ENCODE measurements at regions of chr20 and their contacts with region 1.

Region 1: DNA sequence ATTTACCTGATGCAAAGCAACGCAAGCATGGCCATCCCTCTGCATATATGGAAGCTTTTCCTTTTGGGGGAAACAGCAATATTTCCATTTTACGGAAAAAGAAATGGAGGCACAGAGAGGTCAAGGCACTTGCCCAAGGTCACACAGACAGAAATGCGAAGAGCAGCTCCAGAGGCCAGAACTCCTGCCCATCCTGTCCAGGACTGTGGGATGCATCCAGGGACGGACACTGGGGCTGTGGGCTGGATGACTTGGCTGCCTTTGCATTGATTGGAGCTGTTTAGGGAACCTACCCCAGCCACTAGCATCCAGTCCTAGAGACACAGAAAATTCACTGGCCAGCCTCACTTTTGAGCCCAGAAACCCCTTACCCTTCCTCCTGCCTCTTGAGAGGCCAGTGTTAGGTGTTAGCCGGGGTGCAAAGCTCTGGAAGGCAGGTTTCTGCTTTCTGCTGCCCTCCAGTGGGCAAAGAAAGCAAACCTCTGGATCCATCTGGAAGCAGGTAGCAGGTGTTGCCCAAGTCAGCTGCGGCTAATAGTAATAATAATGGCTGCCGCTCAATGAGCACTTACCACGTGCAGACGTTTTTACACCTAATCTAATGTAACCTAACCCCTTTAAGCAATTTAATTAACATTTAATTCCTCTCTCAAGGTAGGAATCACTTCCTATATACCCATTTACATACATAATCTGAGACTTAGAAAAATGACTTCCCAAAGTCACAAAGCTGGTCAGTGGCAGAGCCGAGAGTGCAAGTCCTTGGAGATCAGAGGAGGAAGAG is 31.7 kb upstream of the CCN5 start:
- DNase-seq: peak in 8 of 9 experiments; percentile 10 to 76 (median 59)
- ATAC-seq: peak; percentile 81
- H3K4me3 ChIP-seq: no peak overlapping the region
- H3K4me3 Mint-ChIP-seq: no peak overlapping the region
- H3K27ac ChIP-seq: no peak overlapping the region
- H3K27ac Mint-ChIP-seq: no peak overlapping the region
- H3K4me1 ChIP-seq: peaks cover 4% of the 10 kb centered on the region
- H3K4me1 Mint-ChIP-seq: peaks cover 9% of the 10 kb centered on the region
- H3K27me3 ChIP-seq: no peaks in the 10 kb centered on the region
- H3K27me3 Mint-ChIP-seq: peaks cover 9% of the 10 kb centered on the region
- CTCF ChIP-seq: peak; percentile 54

Region 2: GRCh38 chr20:44231713-44232468 is 451.6 kb before region 1 on chr20:
- CTCF ChIA-PET with region 1: no interaction called
- POLR2A ChIA-PET with region 1: no interaction called
- intact Hi-C with region 1: no loop called
- DNase-seq: no peak
- ATAC-seq: no peak
- H3K4me3 ChIP-seq: no peak overlapping the region
- H3K4me3 Mint-ChIP-seq: no peak overlapping the region
- H3K27ac ChIP-seq: no peak overlapping the region
- H3K27ac Mint-ChIP-seq: no peak overlapping the region
- H3K4me1 ChIP-seq: peaks cover 7% of the 10 kb centered on the region
- H3K4me1 Mint-ChIP-seq: peaks cover 6% of the 10 kb centered on the region
- H3K27me3 ChIP-seq: no peaks in the 10 kb centered on the region
- H3K27me3 Mint-ChIP-seq: no peaks in the 10 kb centered on the region
- CTCF ChIP-seq: no peak

Region 3: GRCh38 chr20:44388466-44389023 is 294.9 kb before region 1 on chr20:
- CTCF ChIA-PET with region 1: interaction called, 6 read pairs
- POLR2A ChIA-PET with region 1: no interaction called
- intact Hi-C with region 1: loop called (anchors 1 to 2 kb)
- DNase-seq: peak; percentile 13 to 77 (median 63)
- ATAC-seq: peak; percentile 88
- H3K4me3 ChIP-seq: no peak overlapping the region
- H3K4me3 Mint-ChIP-seq: no peak overlapping the region
- H3K27ac ChIP-seq: no peak overlapping the region
- H3K27ac Mint-ChIP-seq: no peak overlapping the region
- H3K4me1 ChIP-seq: no peaks in the 10 kb centered on the region
- H3K4me1 Mint-ChIP-seq: peaks cover 10% of the 10 kb centered on the region
- H3K27me3 ChIP-seq: no peaks in the 10 kb centered on the region
- H3K27me3 Mint-ChIP-seq: peaks cover 14% of the 10 kb centered on the region
- CTCF ChIP-seq: peak; percentile 68

Region 4: GRCh38 chr20:44609511-44610312 is 73.7 kb before region 1 on chr20:
- CTCF ChIA-PET with region 1: interaction called, 42 read pairs
- POLR2A ChIA-PET with region 1: interaction called, 4 read pairs
- intact Hi-C with region 1: loop called (anchors 1 to 5 kb)
- DNase-seq: peak; percentile 71 to 93 (median 87)
- ATAC-seq: peak; percentile 80
- H3K4me3 ChIP-seq: peak overlapping the region in 1 of 2 experiments; percentile 5
- H3K4me3 Mint-ChIP-seq: peak overlapping the region; percentile 53
- H3K27ac ChIP-seq: peak overlapping the region; percentile 69 to 83
- H3K27ac Mint-ChIP-seq: peak overlapping the region; percentile 98
- H3K4me1 ChIP-seq: peaks cover 48% of the 10 kb centered on the region
- H3K4me1 Mint-ChIP-seq: peaks cover 39% of the 10 kb centered on the region
- H3K27me3 ChIP-seq: no peaks in the 10 kb centered on the region
- H3K27me3 Mint-ChIP-seq: no peaks in the 10 kb centered on the region
- CTCF ChIP-seq: peak; percentile 92

Region 5: GRCh38 chr20:44651684-44652423 is 31.6 kb before region 1 on chr20 and contains the start of gene ADA:
- CTCF ChIA-PET with region 1: interaction called, 161 read pairs
- POLR2A ChIA-PET with region 1: interaction called, 5 read pairs
- intact Hi-C with region 1: loop called in 1 of 2 experiments (anchors 1 kb)
- DNase-seq: peak in 8 of 9 experiments; percentile 19 to 75 (median 55)
- ATAC-seq: peak; percentile 66
- H3K4me3 ChIP-seq: peak within 1 kb of the TSS; percentile 87 to 97
- H3K4me3 Mint-ChIP-seq: peak within 1 kb of the TSS; percentile 88
- H3K27ac ChIP-seq: peak within 1 kb of the TSS; percentile 70 to 75
- H3K27ac Mint-ChIP-seq: peak within 1 kb of the TSS; percentile 91
- H3K4me1 ChIP-seq: peaks cover 47% of the 10 kb centered on the region
- H3K4me1 Mint-ChIP-seq: peaks cover 46% of the 10 kb centered on the region
- H3K27me3 ChIP-seq: no peaks in the 10 kb centered on the region
- H3K27me3 Mint-ChIP-seq: no peaks in the 10 kb centered on the region
- CTCF ChIP-seq: no peak
- total RNA-seq, gene ADA: 27.9 to 30.2 TPM

Region 6: DNA sequence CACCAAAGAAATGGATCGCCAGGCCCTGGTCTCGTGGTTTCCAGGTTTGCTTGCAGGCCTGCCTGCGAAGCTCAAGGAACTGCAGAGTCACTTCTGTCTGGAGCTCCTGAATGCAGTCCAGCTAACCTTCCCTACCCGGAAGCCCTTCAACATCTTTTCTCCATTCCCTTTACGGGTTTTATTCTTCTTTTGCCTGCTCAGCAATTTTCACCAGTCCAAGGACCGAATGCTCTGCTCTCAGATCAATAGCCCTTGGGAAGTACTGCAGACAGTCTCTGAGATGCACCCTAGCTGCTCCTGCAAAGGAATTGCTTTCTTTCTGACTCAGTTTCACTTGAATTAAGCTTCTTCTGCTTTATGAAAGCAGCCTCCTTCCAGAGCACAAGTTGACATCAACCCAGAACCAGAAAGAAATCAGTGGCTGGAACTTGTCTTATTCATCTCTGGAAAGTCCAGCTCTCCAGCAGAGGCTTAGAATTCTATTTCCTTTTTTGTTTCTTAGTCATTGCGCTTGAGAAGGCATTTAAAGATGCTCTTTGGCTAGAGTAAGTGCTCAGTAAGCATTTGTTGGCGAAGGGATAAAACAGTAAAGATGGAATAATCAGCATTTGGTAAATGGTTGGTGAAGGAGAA is 183.4 kb after region 1 on chr20:
- CTCF ChIA-PET with region 1: interaction called, 59 read pairs
- POLR2A ChIA-PET with region 1: no interaction called
- intact Hi-C with region 1: loop called (anchors 1 kb)
- DNase-seq: no peak
- ATAC-seq: no peak
- H3K4me3 ChIP-seq: no peak overlapping the region
- H3K4me3 Mint-ChIP-seq: peak overlapping the region; percentile 65
- H3K27ac ChIP-seq: no peak overlapping the region
- H3K27ac Mint-ChIP-seq: no peak overlapping the region
- H3K4me1 ChIP-seq: peaks cover 7% of the 10 kb centered on the region
- H3K4me1 Mint-ChIP-seq: peaks cover 15% of the 10 kb centered on the region
- H3K27me3 ChIP-seq: no peaks in the 10 kb centered on the region
- H3K27me3 Mint-ChIP-seq: peaks cover 6% of the 10 kb centered on the region
- CTCF ChIP-seq: no peak

Region 7: GRCh38 chr20:45293041-45294002 is 609.9 kb after region 1 on chr20:
- CTCF ChIA-PET with region 1: interaction called, 8 read pairs
- POLR2A ChIA-PET with region 1: no interaction called
- intact Hi-C with region 1: loop called in 1 of 2 experiments (anchors 5 kb)
- DNase-seq: peak; percentile 66 to 84 (median 80)
- ATAC-seq: peak; percentile 91
- H3K4me3 ChIP-seq: peak overlapping the region; percentile 39 to 76
- H3K4me3 Mint-ChIP-seq: peak overlapping the region; percentile 80
- H3K27ac ChIP-seq: no peak overlapping the region
- H3K27ac Mint-ChIP-seq: no peak overlapping the region
- H3K4me1 ChIP-seq: no peaks in the 10 kb centered on the region
- H3K4me1 Mint-ChIP-seq: peaks cover 13% of the 10 kb centered on the region
- H3K27me3 ChIP-seq: peaks cover 7 to 8% of the 10 kb centered on the region in 2 experiments
- H3K27me3 Mint-ChIP-seq: peaks cover 45% of the 10 kb centered on the region
- CTCF ChIP-seq: peak; percentile 90